Aorta (tissue), 5 donors: ENCODE measurements at regions of chr12 and their contacts with region 1.

Region 1: GRCh38 chr12:65232476-65233077 is 45.9 kb upstream of the MSRB3 start:
- DNase-seq: no peak
- ATAC-seq: no peak
- H3K4me3 ChIP-seq: no peak overlapping the region
- H3K27ac ChIP-seq: no peak overlapping the region
- H3K4me1 ChIP-seq: no peaks in the 10 kb centered on the region
- H3K27me3 ChIP-seq: no peaks in the 10 kb centered on the region

Region 2: GRCh38 chr12:64461634-64462414 is 770.8 kb before region 1 on chr12:
- intact Hi-C with region 1: no loop called
- DNase-seq: no peak
- ATAC-seq: no peak
- H3K4me3 ChIP-seq: no peak overlapping the region
- H3K27ac ChIP-seq: no peak overlapping the region
- H3K4me1 ChIP-seq: no peaks in the 10 kb centered on the region
- H3K27me3 ChIP-seq: no peaks in the 10 kb centered on the region

Region 3: GRCh38 chr12:65170209-65170881 is 62.2 kb before region 1 on chr12:
- intact Hi-C with region 1: no loop called
- DNase-seq: peak; percentile 79 to 90
- ATAC-seq: peak; percentile 71
- H3K4me3 ChIP-seq: peak overlapping the region; percentile 68 to 73
- H3K27ac ChIP-seq: peak overlapping the region in 1 of 2 donors; percentile 87
- H3K4me1 ChIP-seq: peaks cover 3 to 4% of the 10 kb centered on the region in 2 donors
- H3K27me3 ChIP-seq: no peaks in the 10 kb centered on the region

Region 4: DNA sequence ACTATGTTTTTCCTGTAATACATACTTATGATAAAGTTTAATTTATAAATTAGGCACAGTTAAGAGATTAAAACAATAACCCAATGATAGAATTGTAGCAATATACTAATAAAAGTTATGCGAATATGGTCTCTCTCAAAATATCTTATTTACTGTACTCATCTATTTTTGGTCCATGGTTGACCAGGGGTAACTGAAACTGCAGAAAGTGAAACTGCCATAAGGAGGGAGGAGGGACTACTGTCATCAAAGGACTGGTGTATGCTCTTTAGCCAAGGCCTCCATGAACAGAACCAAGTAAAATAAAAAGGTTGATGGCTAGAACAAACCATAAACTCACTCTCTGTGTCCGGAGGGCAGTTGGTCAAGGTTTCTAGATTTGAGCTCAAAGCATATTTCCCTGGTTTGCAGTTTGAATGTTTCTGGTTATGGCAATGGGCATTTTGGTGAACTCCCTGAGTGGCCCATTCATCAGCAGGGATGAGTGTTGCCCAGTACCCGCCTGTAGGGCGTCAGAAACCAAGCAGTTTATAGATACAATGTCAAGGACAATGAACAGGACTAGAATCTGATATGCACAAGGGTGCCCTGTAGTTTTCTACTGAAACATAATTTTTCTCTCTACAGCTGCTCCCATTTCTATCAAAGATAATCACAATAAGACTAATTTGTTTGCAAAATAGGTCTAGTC is 43.4 kb before region 1 on chr12:
- intact Hi-C with region 1: loop called in 1 of 2 experiments (anchors 10 kb)
- DNase-seq: no peak
- ATAC-seq: no peak
- H3K4me3 ChIP-seq: no peak overlapping the region
- H3K27ac ChIP-seq: no peak overlapping the region
- H3K4me1 ChIP-seq: peaks cover 0 to 4% of the 10 kb centered on the region in 2 donors
- H3K27me3 ChIP-seq: no peaks in the 10 kb centered on the region

Region 5: GRCh38 chr12:65454115-65454787 is 221.7 kb after region 1 on chr12:
- intact Hi-C with region 1: no loop called
- DNase-seq: no peak
- ATAC-seq: no peak
- H3K4me3 ChIP-seq: no peak overlapping the region
- H3K27ac ChIP-seq: no peak overlapping the region
- H3K4me1 ChIP-seq: peaks cover 0 to 2% of the 10 kb centered on the region in 2 donors
- H3K27me3 ChIP-seq: no peaks in the 10 kb centered on the region

Region 6: GRCh38 chr12:65464930-65465329 is 232.4 kb after region 1 on chr12:
- intact Hi-C with region 1: no loop called
- DNase-seq: no peak
- ATAC-seq: no peak
- H3K4me3 ChIP-seq: no peak overlapping the region
- H3K27ac ChIP-seq: no peak overlapping the region
- H3K4me1 ChIP-seq: peaks cover 0 to 2% of the 10 kb centered on the region in 2 donors
- H3K27me3 ChIP-seq: no peaks in the 10 kb centered on the region